H1 (cell line): ENCODE measurements at regions of chr2 and their contacts with region 1.

Region 1: GRCh38 chr2:53422979-53423378 is 344.6 kb upstream of the CHAC2 start:
- DNase-seq: peak; percentile 27 to 59
- H3K4me3 ChIP-seq: no peak overlapping the region
- H3K27ac ChIP-seq: no peak overlapping the region
- H3K4me1 ChIP-seq: no peaks in the 10 kb centered on the region; a peak in 1 of 7 replicates
- H3K27me3 ChIP-seq: no peaks in the 10 kb centered on the region
- CTCF ChIP-seq: peak; percentile 26 to 80 (median 59)
- EP300 ChIP-seq: no peak
- POLR2A ChIP-seq: no peak
- RAD21 ChIP-seq: peak; percentile 83 to 86

Region 2: DNA sequence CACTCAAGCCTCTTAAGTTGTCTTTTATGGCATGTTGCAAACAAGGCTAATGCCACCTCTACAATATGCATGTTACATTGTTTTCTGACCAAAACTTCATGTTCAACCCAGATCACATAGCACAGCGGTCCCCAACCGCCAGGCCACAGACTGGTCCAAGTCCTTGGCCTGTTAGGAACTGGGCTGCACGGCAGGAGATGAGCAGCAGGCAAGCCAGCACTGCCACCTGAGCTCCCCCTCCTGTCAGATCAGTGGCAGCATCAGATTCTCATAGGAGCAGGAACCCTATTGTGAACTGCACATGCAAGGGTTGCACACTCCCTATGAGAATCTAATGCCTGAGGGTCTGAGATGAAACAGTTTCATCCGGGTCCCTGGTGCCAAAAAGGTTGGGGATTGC is 19.8 kb after region 1 on chr2:
- CTCF ChIA-PET with region 1: interaction called, 11 read pairs
- POLR2A ChIA-PET with region 1: no interaction called
- DNase-seq: peak in 1 of 2 experiments; percentile 60
- H3K4me3 ChIP-seq: no peak overlapping the region
- H3K27ac ChIP-seq: no peak overlapping the region
- H3K4me1 ChIP-seq: no peaks in the 10 kb centered on the region
- H3K27me3 ChIP-seq: no peaks in the 10 kb centered on the region
- CTCF ChIP-seq: peak; percentile 46 to 61 (median 60)
- EP300 ChIP-seq: no peak
- POLR2A ChIP-seq: no peak
- RAD21 ChIP-seq: peak; percentile 65 to 74

Region 3: GRCh38 chr2:53473248-53473647 is 50.3 kb after region 1 on chr2:
- CTCF ChIA-PET with region 1: interaction called, 12 read pairs
- POLR2A ChIA-PET with region 1: no interaction called
- DNase-seq: no peak
- H3K4me3 ChIP-seq: no peak overlapping the region
- H3K27ac ChIP-seq: no peak overlapping the region
- H3K4me1 ChIP-seq: no peaks in the 10 kb centered on the region
- H3K27me3 ChIP-seq: no peaks in the 10 kb centered on the region
- CTCF ChIP-seq: peak; percentile 51 to 61 (median 61)
- EP300 ChIP-seq: no peak
- POLR2A ChIP-seq: no peak
- RAD21 ChIP-seq: peak; percentile 76 to 87

Region 4: GRCh38 chr2:53515435-53516332 is 92.7 kb after region 1 on chr2:
- CTCF ChIA-PET with region 1: interaction called, 15 read pairs
- POLR2A ChIA-PET with region 1: no interaction called
- DNase-seq: no peak
- H3K4me3 ChIP-seq: no peak overlapping the region
- H3K27ac ChIP-seq: no peak overlapping the region
- H3K4me1 ChIP-seq: peaks cover 0 to 3% (median 1%) of the 10 kb centered on the region in 4 experiments; a peak in 2 of 7 replicates
- H3K27me3 ChIP-seq: no peaks in the 10 kb centered on the region
- CTCF ChIP-seq: peak; percentile 25 to 47 (median 46); a peak in 3 of 4 replicates
- EP300 ChIP-seq: no peak
- POLR2A ChIP-seq: no peak
- RAD21 ChIP-seq: peak; percentile 59 to 67

Region 5: DNA sequence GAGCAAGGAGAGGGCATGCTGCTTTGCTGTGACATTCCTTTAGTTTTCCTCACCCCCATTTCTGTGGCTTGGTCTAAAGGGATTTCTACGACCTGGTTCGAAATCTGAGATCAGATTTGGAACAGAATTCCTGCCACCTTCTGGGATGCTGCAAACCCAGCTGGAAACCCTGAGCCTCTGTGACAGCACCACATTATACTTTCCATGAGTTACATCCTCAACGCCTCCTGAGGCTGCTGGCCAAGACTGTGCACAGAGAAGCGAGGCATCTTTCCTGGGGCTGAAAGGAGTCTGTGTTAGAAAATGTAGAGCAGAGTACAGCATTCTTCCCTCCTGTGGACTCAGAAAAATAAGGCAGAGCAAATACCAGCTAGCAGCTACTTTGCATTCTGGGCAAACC is 206.5 kb after region 1 on chr2:
- CTCF ChIA-PET with region 1: interaction called, 10 read pairs
- POLR2A ChIA-PET with region 1: no interaction called
- DNase-seq: no peak
- H3K4me3 ChIP-seq: no peak overlapping the region
- H3K27ac ChIP-seq: no peak overlapping the region
- H3K4me1 ChIP-seq: peaks cover 0 to 2% (median 0%) of the 10 kb centered on the region in 4 experiments; a peak in 1 of 7 replicates
- H3K27me3 ChIP-seq: no peaks in the 10 kb centered on the region
- CTCF ChIP-seq: no peak
- EP300 ChIP-seq: no peak
- POLR2A ChIP-seq: no peak
- RAD21 ChIP-seq: no peak